ENCODE measurements at regions of chr6 and their contacts with region 1.

Region 1: GRCh38 chr6:53794720-53795253 is at the start of gene LRRC1:
- DNase-seq: peak; percentile 74 to 96
- H3K4me3 ChIP-seq: peak within 1 kb of the TSS; percentile 86
- H3K27ac ChIP-seq: peak within 1 kb of the TSS; percentile 70
- H3K4me1 ChIP-seq: peaks cover 32% of the 10 kb centered on the region
- H3K27me3 ChIP-seq: no peaks in the 10 kb centered on the region
- CTCF ChIP-seq: no peak
- total RNA-seq, gene LRRC1: 23.0 and 26.4 TPM in 2 replicates

Region 2: GRCh38 chr6:53492860-53493634 is 301.7 kb before region 1 on chr6:
- CTCF ChIA-PET with region 1: no interaction called
- POLR2A ChIA-PET with region 1: no interaction called
- intact Hi-C with region 1: loop called (anchors 10 kb)
- DNase-seq: no peak
- H3K4me3 ChIP-seq: no peak overlapping the region
- H3K27ac ChIP-seq: no peak overlapping the region
- H3K4me1 ChIP-seq: peaks cover 17% of the 10 kb centered on the region
- H3K27me3 ChIP-seq: no peaks in the 10 kb centered on the region
- CTCF ChIP-seq: peak; percentile 80

Region 3: DNA sequence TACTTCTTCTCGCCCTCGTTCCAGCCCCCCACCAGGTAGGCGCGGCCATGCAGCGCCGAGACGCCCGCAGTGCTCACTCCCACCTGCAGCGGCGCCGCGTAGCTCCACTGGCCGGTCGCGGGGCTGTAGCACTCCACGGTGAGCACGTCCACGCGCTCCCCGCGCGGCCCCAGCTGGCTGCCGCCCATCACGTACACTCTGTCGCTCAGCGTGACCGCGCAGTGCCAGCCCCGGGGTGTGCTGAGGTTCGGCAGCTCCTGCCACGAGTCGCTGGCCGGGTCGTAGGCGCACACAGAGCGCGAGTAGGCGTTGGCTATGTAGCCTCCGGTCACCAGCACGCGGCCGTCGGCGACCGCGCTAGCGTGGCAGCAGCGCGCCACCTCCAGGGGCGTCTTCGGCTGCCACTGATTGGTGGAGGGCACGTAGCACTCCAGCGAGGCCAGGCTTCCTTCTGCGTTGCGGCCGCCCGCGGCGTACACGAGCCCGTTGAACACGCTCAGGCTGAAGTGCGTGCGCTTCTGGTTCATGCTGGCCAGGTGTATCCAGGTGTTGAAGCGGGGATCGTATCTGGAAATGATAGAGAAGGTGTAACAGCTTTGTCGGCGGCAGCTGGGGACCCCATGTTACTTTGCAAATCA is 142.9 kb before region 1 on chr6:
- CTCF ChIA-PET with region 1: no interaction called
- POLR2A ChIA-PET with region 1: no interaction called
- intact Hi-C with region 1: loop called (anchors 10 kb)
- DNase-seq: peak; percentile 82 to 89
- H3K4me3 ChIP-seq: peak overlapping the region; percentile 65
- H3K27ac ChIP-seq: peak overlapping the region; percentile 90
- H3K4me1 ChIP-seq: peaks cover 20% of the 10 kb centered on the region
- H3K27me3 ChIP-seq: no peaks in the 10 kb centered on the region
- CTCF ChIP-seq: no peak; the same call in 1 of the 2 replicates

Region 4: GRCh38 chr6:53746442-53747103 is 48.2 kb before region 1 on chr6:
- CTCF ChIA-PET with region 1: no interaction called
- POLR2A ChIA-PET with region 1: interaction called, 5 read pairs
- intact Hi-C with region 1: loop called (anchors 5 kb)
- DNase-seq: peak in 1 of 2 experiments; percentile 66
- H3K4me3 ChIP-seq: no peak overlapping the region; the same call in 1 of the 2 replicates
- H3K27ac ChIP-seq: peak overlapping the region; percentile 55
- H3K4me1 ChIP-seq: peaks cover 36% of the 10 kb centered on the region
- H3K27me3 ChIP-seq: no peaks in the 10 kb centered on the region
- CTCF ChIP-seq: no peak

Region 5: GRCh38 chr6:53825532-53826321 is 30.9 kb after region 1 on chr6:
- CTCF ChIA-PET with region 1: no interaction called
- POLR2A ChIA-PET with region 1: no interaction called
- intact Hi-C with region 1: no loop called
- DNase-seq: no peak
- H3K4me3 ChIP-seq: no peak overlapping the region
- H3K27ac ChIP-seq: no peak overlapping the region
- H3K4me1 ChIP-seq: peaks cover 18% of the 10 kb centered on the region
- H3K27me3 ChIP-seq: no peaks in the 10 kb centered on the region
- CTCF ChIP-seq: no peak

Region 6: GRCh38 chr6:53956068-53956711 is 161.4 kb after region 1 on chr6:
- CTCF ChIA-PET with region 1: interaction called, 23 read pairs
- POLR2A ChIA-PET with region 1: interaction called, 6 read pairs
- intact Hi-C with region 1: loop called (anchors 1 kb)
- DNase-seq: peak; percentile 70 to 80
- H3K4me3 ChIP-seq: no peak overlapping the region
- H3K27ac ChIP-seq: no peak overlapping the region
- H3K4me1 ChIP-seq: no peaks in the 10 kb centered on the region
- H3K27me3 ChIP-seq: no peaks in the 10 kb centered on the region
- CTCF ChIP-seq: peak; percentile 88